ENCODE measurements at regions of chr1 and their contacts with region 1.

Region 1: DNA sequence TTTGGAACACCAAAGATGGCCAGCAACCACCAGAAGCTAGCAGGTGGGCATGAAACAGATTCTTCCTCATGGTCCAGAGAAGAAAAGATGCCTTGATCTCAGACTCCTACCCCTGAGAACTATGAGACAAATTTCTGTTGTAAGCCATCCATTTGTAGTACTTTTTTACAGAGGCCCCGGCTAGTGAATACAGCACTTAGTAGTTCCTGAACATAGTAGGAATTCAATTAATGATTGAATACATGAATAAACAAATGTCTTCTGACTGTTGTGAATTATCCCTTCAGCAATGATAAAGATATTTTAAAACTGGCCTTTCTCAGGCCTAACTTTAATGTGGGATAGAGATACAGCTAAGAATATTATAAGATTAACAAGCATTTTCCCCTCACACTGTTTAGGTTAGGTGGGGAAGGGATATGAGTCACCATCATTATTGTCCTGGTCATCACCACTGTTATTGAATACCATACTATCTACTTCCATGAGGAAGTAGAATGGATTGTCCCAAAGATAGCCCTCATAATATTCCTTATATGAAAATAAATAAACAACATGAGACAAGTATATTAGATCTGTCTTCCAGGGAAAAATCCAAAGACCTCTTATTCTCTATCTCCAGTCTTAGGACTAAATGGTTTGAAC is 51.4 kb downstream of the ADCY10 start:
- DNase-seq: peak in 1 of 4 experiments; percentile 45
- ATAC-seq: peak; percentile 10
- H3K4me3 ChIP-seq: no peak overlapping the region
- H3K27ac ChIP-seq: peak overlapping the region; percentile 64; the same call in 1 of the 3 replicates
- H3K4me1 ChIP-seq: peaks cover 21 to 44% of the 10 kb centered on the region in 2 experiments; a peak in 4 of 5 replicates
- H3K27me3 ChIP-seq: no peaks in the 10 kb centered on the region
- CTCF ChIP-seq: no peak
- EP300 ChIP-seq: no peak; the same call in 1 of the 2 replicates
- POLR2A ChIP-seq: no peak
- RAD21 ChIP-seq: no peak

Region 2: GRCh38 chr1:167553136-167554027 is 309.2 kb before region 1 on chr1 and contains the start of gene CREG1:
- CTCF ChIA-PET with region 1: no interaction called
- POLR2A ChIA-PET with region 1: no interaction called
- in situ Hi-C with region 1: no loop called
- intact Hi-C with region 1: loop called (anchors 5 kb)
- DNase-seq: peak; percentile 98 to 99 (median 98)
- ATAC-seq: peak; percentile 93
- H3K4me3 ChIP-seq: peak within 1 kb of the TSS; percentile 73
- H3K27ac ChIP-seq: peak within 1 kb of the TSS; percentile 70
- H3K4me1 ChIP-seq: peaks cover 23 to 45% of the 10 kb centered on the region in 2 experiments
- H3K27me3 ChIP-seq: no peaks in the 10 kb centered on the region
- CTCF ChIP-seq: peak in 2 of 3 experiments; percentile 24 to 41; a peak in 2 of 6 replicates
- EP300 ChIP-seq: 0 out of 2 replicates have a peak, but pooled peaks have one; percentile 9
- POLR2A ChIP-seq: peak; percentile 82
- RAD21 ChIP-seq: peak in 1 of 2 experiments; percentile 12; a peak in 1 of 4 replicates
- polyA plus RNA-seq, gene CREG1: 45.7 to 58.2 TPM

Region 3: DNA sequence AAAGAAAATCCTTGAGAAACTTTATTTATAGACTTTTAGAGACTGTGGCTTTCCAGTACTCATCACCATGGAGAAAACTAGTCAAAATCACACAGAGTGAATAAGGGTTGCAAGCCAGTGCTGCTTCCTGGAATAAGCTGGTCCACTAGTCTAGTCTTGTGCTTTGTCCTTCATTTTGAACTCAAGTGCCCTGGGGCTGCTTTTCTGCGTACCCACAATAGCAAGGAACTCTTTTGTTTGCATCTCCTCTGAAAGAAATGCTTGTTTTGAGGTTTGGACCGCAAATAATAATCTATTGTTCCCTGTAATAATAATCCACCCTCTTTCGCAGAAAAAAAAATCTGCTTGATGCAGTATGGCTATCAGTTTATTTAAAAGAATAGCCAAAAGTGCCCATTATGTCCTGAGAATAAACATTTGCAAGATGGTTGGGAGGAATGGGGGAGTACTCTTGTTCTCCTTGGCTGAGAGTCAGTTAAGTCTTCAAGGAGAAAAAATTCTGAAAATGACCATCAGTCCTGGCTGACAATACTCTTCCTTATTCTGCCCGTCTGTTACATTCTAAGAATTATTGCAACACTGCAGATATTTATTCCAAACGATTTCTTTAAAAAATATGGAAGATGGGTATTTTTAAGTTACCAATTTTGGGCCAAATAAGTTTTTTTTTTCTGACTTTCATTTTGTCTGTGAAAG is 98.9 kb before region 1 on chr1:
- CTCF ChIA-PET with region 1: no interaction called
- POLR2A ChIA-PET with region 1: no interaction called
- in situ Hi-C with region 1: no loop called
- intact Hi-C with region 1: loop called (anchors 5 kb)
- DNase-seq: no peak
- ATAC-seq: no peak
- H3K4me3 ChIP-seq: no peak overlapping the region
- H3K27ac ChIP-seq: no peak overlapping the region
- H3K4me1 ChIP-seq: peaks cover 11 to 54% of the 10 kb centered on the region in 2 experiments
- H3K27me3 ChIP-seq: no peaks in the 10 kb centered on the region
- CTCF ChIP-seq: no peak
- EP300 ChIP-seq: no peak
- POLR2A ChIP-seq: no peak
- RAD21 ChIP-seq: no peak

Region 4: DNA sequence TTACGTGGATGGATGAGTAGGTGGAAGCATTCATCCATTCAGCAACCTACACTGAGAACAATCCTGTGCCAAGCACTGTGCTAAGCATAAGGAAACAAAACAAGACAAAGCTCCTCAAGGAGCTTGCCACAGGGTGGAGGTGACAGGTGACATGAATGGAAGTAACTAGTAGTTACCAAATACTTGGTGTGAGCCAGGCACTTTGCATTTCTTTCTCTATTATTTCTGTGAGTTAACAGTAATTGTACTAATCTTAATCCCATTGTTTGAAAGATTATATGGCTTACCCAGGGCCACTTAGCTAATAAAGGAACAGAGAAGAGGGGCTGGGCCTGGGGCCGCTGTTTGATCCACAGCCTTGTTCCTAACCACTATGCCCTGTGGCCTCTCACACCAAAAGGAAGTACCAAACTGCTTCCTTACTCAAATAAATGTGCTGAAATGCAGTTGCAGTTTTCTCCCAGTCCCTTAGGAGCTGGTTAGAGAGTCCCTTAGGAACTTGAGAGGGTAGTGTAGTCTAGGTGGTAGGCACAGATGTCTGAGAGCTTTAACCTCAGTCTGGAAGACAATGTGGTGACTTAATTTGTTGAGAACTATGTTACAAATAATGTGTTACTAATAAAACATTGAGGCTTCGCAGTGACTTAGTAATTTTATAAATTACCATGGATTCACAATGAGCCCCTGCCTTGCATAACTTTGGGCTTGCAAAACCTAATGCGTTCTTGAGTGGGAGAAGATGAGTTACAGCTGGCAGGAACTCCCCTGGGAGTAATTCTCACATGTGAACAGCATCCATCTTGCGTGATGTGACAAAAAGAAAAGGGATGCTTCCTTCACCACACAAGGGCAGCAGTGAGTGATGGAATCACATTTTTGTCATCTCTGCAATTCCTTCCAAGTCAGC is 71.0 kb before region 1 on chr1:
- CTCF ChIA-PET with region 1: no interaction called
- POLR2A ChIA-PET with region 1: no interaction called
- in situ Hi-C with region 1: no loop called
- intact Hi-C with region 1: no loop called
- DNase-seq: no peak
- ATAC-seq: peak; percentile 31
- H3K4me3 ChIP-seq: no peak overlapping the region
- H3K27ac ChIP-seq: no peak overlapping the region
- H3K4me1 ChIP-seq: no peaks in the 10 kb centered on the region
- H3K27me3 ChIP-seq: no peaks in the 10 kb centered on the region
- CTCF ChIP-seq: 0 out of 6 replicates have a peak, but pooled peaks of 1 of the 3 experiments have one; percentile 13
- EP300 ChIP-seq: no peak
- POLR2A ChIP-seq: no peak
- RAD21 ChIP-seq: peak in 1 of 2 experiments; percentile 23; a peak in 2 of 4 replicates

Region 5: GRCh38 chr1:167819849-167820683 is 42.5 kb before region 1 on chr1:
- CTCF ChIA-PET with region 1: no interaction called
- POLR2A ChIA-PET with region 1: interaction called, 3 read pairs
- in situ Hi-C with region 1: no loop called
- intact Hi-C with region 1: loop called (anchors 2 kb)
- DNase-seq: peak; percentile 90 to 94 (median 92)
- ATAC-seq: peak; percentile 94
- H3K4me3 ChIP-seq: peak overlapping the region; percentile 38
- H3K27ac ChIP-seq: peak overlapping the region; percentile 71
- H3K4me1 ChIP-seq: peaks cover 22 to 41% of the 10 kb centered on the region in 2 experiments
- H3K27me3 ChIP-seq: no peaks in the 10 kb centered on the region
- CTCF ChIP-seq: no peak
- EP300 ChIP-seq: peak; percentile 42; the same call in 1 of the 2 replicates
- POLR2A ChIP-seq: peak; percentile 74
- RAD21 ChIP-seq: peak; percentile 25 to 36; a peak in 3 of 4 replicates

Region 6: GRCh38 chr1:168082008-168082876 is 219.7 kb after region 1 on chr1:
- CTCF ChIA-PET with region 1: no interaction called
- POLR2A ChIA-PET with region 1: interaction called, 3 read pairs
- in situ Hi-C with region 1: no loop called
- intact Hi-C with region 1: loop called (anchors 5 kb)
- DNase-seq: peak; percentile 78 to 87 (median 81)
- ATAC-seq: peak; percentile 92
- H3K4me3 ChIP-seq: no peak overlapping the region
- H3K27ac ChIP-seq: no peak overlapping the region; the same call in 2 of the 3 replicates
- H3K4me1 ChIP-seq: peaks cover 8 to 9% of the 10 kb centered on the region in 2 experiments; a peak in 4 of 5 replicates
- H3K27me3 ChIP-seq: no peaks in the 10 kb centered on the region
- CTCF ChIP-seq: peak; percentile 90 to 98 (median 96)
- EP300 ChIP-seq: no peak
- POLR2A ChIP-seq: no peak
- RAD21 ChIP-seq: peak; percentile 62 to 89